Common myeloid progenitor, CD34-positive (primary cell): ENCODE measurements at regions of chr6 and their contacts with region 1.

Region 1: GRCh38 chr6:34414999-34415858 is 10.6 kb downstream of the RPS10 start:
- DNase-seq: peak; percentile 89 to 94 (median 93)
- H3K4me3 ChIP-seq: no peak overlapping the region
- H3K27ac ChIP-seq: no peak overlapping the region
- H3K4me1 ChIP-seq: peaks cover 0 to 4% (median 2%) of the 10 kb centered on the region in 4 experiments
- H3K27me3 ChIP-seq: no peaks in the 10 kb centered on the region

Region 2: GRCh38 chr6:34149452-34149810 is 265.8 kb before region 1 on chr6:
- CTCF ChIA-PET with region 1: no interaction called
- POLR2A ChIA-PET with region 1: no interaction called
- DNase-seq: no peak
- H3K4me3 ChIP-seq: no peak overlapping the region
- H3K27ac ChIP-seq: no peak overlapping the region
- H3K4me1 ChIP-seq: peaks cover 0 to 19% (median 17%) of the 10 kb centered on the region in 4 experiments
- H3K27me3 ChIP-seq: peaks cover 0 to 92% (median 53%) of the 10 kb centered on the region in 5 experiments

Region 3: GRCh38 chr6:34196126-34196830 is 219.0 kb before region 1 on chr6:
- CTCF ChIA-PET with region 1: interaction called, 68 read pairs
- POLR2A ChIA-PET with region 1: no interaction called
- DNase-seq: peak; percentile 83 to 89 (median 87)
- H3K4me3 ChIP-seq: peak overlapping the region; percentile 10 to 83 (median 60)
- H3K27ac ChIP-seq: no peak overlapping the region
- H3K4me1 ChIP-seq: peaks cover 0 to 15% (median 10%) of the 10 kb centered on the region in 4 experiments
- H3K27me3 ChIP-seq: peaks cover 0 to 4% (median 0%) of the 10 kb centered on the region in 5 experiments

Region 4: DNA sequence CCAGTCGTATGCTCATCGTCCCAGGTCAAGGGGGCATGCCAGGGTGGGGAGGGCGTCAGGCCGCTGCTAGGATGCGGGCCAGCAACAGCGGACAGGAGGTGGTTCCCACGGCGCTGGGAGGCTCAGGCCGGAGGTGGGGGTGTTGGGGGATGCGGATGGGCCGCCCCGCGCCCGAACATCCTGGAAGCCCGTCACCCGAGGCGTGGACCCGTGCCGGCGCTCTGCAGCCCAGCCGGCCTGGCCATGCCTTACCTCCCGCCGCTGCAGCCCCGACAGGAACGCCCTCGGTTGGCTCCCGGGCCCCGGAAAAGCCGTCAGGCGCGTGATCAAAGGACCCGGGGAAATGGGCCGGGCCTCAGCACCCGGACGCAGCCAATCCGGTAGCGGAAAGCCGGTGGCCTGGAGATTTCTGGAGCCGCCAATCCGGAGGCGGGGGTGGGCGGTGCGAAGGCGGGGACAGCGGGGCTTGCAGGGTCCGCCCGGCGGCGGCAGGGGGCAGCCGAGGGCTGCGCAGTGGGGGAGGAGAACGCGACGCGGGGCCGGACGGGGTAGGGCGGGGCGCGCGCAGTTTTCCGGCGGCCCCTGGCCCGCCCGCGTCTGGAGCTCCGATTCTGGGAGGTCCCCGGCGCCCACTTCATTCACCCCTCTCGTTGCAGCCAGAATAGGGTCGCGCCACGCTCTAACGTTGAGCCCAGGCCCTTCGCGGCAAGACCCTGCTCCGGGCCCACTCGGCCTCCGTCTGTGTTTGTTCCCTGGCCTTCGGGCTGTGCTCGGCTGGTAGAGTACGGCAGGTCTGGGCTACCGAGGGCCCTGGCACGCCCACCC is 166.3 kb before region 1 on chr6 and contains the start of gene SMIM29:
- CTCF ChIA-PET with region 1: interaction called, 139 read pairs
- POLR2A ChIA-PET with region 1: interaction called, 15 read pairs
- DNase-seq: peak; percentile 89 to 95 (median 95)
- H3K4me3 ChIP-seq: peak within 1 kb of the TSS; percentile 53 to 94 (median 89)
- H3K27ac ChIP-seq: peak within 1 kb of the TSS; percentile 33 to 83
- H3K4me1 ChIP-seq: peaks cover 5 to 36% (median 30%) of the 10 kb centered on the region in 4 experiments
- H3K27me3 ChIP-seq: no peaks in the 10 kb centered on the region

Region 5: GRCh38 chr6:34392497-34393190 is 22.6 kb before region 1 on chr6 and contains the start of gene NUDT3:
- CTCF ChIA-PET with region 1: interaction called, 13 read pairs
- POLR2A ChIA-PET with region 1: no interaction called
- DNase-seq: peak; percentile 97 to 98 (median 98)
- H3K4me3 ChIP-seq: peak within 1 kb of the TSS; percentile 82 to 96 (median 90)
- H3K27ac ChIP-seq: peak within 1 kb of the TSS; percentile 61 to 86
- H3K4me1 ChIP-seq: peaks cover 10 to 30% (median 19%) of the 10 kb centered on the region in 4 experiments
- H3K27me3 ChIP-seq: no peaks in the 10 kb centered on the region

Region 6: GRCh38 chr6:34459899-34460593 is 44.8 kb after region 1 on chr6:
- CTCF ChIA-PET with region 1: no interaction called
- POLR2A ChIA-PET with region 1: no interaction called
- DNase-seq: peak; percentile 61 to 85 (median 78)
- H3K4me3 ChIP-seq: no peak overlapping the region
- H3K27ac ChIP-seq: no peak overlapping the region
- H3K4me1 ChIP-seq: peaks cover 0 to 1% (median under 1%) of the 10 kb centered on the region in 4 experiments
- H3K27me3 ChIP-seq: peaks cover 0 to 16% (median 4%) of the 10 kb centered on the region in 5 experiments